Activated naive CD4-positive, alpha-beta T cell treated with anti-CD3 and anti-CD28 coated beads for 36 hours (primary cell): ENCODE measurements at regions of chr7 and their contacts with region 1.

Region 1: GRCh38 chr7:6008668-6009611 is at the starts of genes AIMP2 and PMS2:
- DNase-seq: peak; percentile 99
- H3K4me3 Mint-ChIP-seq: peak within 1 kb of the TSS; percentile 87
- H3K27ac Mint-ChIP-seq: peak within 1 kb of the TSS; percentile 89
- H3K4me1 Mint-ChIP-seq: peaks cover 45% of the 10 kb centered on the region
- H3K27me3 Mint-ChIP-seq: no peaks in the 10 kb centered on the region
- total RNA-seq, gene AIMP2: 30.8 to 32.2 TPM
- total RNA-seq, gene PMS2: 19.4 to 19.8 TPM

Region 2: DNA sequence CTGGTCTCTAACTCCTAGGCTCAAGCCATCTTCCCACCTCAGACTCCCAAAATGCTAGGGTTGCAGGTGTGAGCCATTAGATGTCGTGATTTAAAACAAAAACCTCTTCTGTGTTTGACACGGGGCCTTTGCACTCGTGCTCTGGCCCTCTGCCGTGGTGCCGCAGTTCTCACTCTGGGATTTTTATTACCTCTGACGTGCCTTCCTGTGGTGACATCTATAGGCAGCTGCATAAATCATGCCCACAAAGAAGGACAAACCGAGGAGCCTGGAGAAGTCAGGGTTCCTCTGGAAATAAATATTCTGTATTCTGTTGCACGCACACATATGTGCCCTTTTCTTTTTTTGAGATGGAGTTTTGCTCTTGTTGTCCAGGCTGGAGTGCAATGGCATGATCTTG is 154.2 kb before region 1 on chr7:
- CTCF ChIA-PET with region 1: no interaction called
- intact Hi-C with region 1: loop called (anchors 1 kb)
- DNase-seq: no peak
- H3K4me3 Mint-ChIP-seq: no peak overlapping the region
- H3K27ac Mint-ChIP-seq: no peak overlapping the region
- H3K4me1 Mint-ChIP-seq: peaks cover 14% of the 10 kb centered on the region
- H3K27me3 Mint-ChIP-seq: no peaks in the 10 kb centered on the region

Region 3: GRCh38 chr7:5997222-5997808 is 11.6 kb before region 1 on chr7:
- CTCF ChIA-PET with region 1: interaction called, 13 read pairs
- intact Hi-C with region 1: no loop called
- DNase-seq: peak; percentile 57
- H3K4me3 Mint-ChIP-seq: no peak overlapping the region
- H3K27ac Mint-ChIP-seq: no peak overlapping the region
- H3K4me1 Mint-ChIP-seq: no peaks in the 10 kb centered on the region
- H3K27me3 Mint-ChIP-seq: no peaks in the 10 kb centered on the region

Region 4: DNA sequence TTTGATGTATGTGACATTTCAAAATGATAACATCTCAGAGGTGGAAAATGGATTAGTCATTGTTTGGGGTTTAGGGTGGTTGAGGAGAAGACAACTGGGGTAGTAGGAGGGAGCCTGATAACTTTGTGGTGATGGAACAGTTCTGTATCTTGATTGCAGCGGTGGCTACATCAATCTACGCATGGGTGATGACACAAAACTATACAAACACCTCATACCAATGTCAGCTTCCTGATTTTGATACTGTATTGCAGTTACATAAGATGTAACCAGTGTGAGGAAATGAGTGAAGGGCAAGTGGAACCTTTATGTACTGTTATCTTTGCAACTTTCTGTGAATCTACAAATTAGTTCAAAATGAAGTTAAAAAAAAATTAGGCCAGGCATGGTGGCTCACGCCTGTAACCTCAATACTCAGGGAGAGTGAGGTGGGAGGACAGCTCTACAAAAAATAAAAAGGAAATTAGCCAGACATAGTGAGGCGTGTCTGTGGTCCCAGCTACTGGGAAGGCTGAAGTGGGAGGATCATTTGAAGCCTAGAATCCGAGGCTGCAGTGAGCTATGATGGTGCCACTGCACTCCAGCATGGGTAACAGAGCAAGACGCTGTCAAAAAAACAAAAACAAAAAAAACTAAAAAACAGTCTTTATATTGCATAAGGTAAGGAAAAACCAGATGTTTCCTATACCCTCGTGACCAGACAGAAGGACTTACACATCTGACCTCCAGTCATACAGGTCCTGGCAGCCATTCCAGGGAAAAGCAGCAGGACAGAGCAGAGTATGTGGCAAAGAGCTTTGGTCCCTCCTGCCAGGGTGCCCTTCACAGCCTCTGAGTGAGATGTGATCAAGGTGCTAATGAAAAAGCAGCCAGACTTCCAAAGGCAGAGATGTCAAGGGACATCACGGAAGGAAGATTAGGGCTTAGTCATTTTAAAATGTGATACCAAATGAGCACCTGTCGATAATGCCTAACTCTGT is 212.7 kb after region 1 on chr7:
- CTCF ChIA-PET with region 1: no interaction called
- intact Hi-C with region 1: loop called (anchors 1 kb)
- DNase-seq: peak; percentile 57
- H3K4me3 Mint-ChIP-seq: peak overlapping the region; percentile 3
- H3K27ac Mint-ChIP-seq: peak overlapping the region; percentile 55
- H3K4me1 Mint-ChIP-seq: peaks cover 17% of the 10 kb centered on the region
- H3K27me3 Mint-ChIP-seq: no peaks in the 10 kb centered on the region

Region 5: DNA sequence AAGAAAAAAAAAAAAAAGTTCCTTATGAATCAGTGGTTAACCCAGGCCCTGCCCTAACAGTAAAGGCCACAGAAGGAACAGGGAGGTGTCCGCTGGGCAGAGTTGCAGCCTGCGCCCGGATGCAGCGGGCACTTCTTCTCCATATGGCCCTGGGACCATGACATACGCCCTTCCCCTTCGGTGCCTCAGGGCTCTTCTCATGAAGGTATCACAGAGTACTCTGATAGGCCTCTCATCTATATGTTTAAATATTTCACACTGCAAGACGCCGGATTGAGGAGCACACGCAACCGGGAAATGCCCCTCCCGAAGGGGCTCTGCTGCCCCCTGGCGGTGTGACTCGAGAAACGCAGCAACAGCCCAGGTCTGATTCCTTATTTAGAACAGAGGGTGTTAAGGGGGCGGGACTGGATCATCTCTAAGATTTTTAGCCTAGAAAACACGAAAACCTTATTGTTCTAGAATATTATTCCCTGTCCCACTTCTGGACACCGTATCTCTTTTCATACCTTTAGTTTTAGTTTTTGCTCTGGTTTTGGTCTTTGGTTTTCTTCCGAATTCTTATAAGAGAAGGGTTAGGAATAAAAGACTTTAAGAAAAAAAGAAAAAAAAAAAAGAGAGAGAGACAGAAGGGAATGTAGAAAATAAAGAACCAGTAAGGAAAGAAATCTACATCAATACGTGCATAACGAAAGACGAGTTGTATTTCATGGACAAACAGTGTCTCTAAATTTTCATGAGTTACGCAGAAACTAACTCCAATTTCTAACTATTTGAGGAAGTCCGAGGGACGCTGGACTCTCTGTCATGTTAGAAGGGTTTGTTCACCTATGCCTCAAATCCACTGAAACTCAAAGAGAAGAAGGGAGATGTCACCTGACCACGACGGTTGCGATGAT is 426.8 kb after region 1 on chr7:
- CTCF ChIA-PET with region 1: no interaction called
- intact Hi-C with region 1: loop called (anchors 5 kb)
- DNase-seq: peak; percentile 95
- H3K4me3 Mint-ChIP-seq: peak overlapping the region; percentile 58
- H3K27ac Mint-ChIP-seq: peak overlapping the region; percentile 78
- H3K4me1 Mint-ChIP-seq: peaks cover 43% of the 10 kb centered on the region
- H3K27me3 Mint-ChIP-seq: no peaks in the 10 kb centered on the region